Sigmoid colon (tissue), 7 donors: ENCODE measurements at regions of chr4 and their contacts with region 1.

Region 1: GRCh38 chr4:122151982-122152710 is at the start of gene BLTP1:
- DNase-seq: peak; percentile 92
- H3K4me3 ChIP-seq: peak within 1 kb of the TSS; percentile 77 to 96 (median 84)
- H3K27ac ChIP-seq: peak within 1 kb of the TSS; percentile 90 to 95 (median 92)
- H3K4me1 ChIP-seq: peaks cover 0 to 28% (median 17%) of the 10 kb centered on the region in 4 donors
- H3K27me3 ChIP-seq: no peaks in the 10 kb centered on the region
- CTCF ChIP-seq: no peak
- EP300 ChIP-seq: peak in 1 of 4 donors; percentile 32
- POLR2A ChIP-seq: peak; percentile 26 to 62
- total RNA-seq, gene BLTP1: 75.8 to 120 (median 85.1) TPM

Region 2: DNA sequence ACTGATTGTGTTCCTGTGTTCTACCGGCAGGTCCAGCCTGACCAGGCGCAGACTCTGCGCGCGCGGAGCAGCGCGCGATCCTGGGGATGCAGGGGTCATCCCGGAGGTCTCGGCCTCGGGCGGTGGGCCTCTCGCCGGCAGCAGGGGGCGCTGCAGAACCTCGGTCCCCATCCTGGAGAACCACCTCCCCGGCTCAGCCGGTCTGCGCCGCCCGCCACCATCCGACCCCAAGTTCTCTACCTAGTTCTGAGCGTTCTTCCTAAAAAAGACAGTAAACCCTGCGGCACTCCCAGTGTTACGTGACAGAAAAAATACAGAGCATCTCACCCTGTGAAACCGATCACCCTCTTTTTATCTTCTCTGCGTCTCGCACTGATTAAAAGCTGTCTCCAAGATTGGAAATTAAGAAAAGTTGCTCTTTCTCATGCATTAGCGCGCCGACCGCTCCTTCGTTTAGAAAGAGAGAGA is 201.9 kb before region 1 on chr4:
- intact Hi-C with region 1: loop called (anchors 5 kb)
- DNase-seq: peak; percentile 77
- H3K4me3 ChIP-seq: peak overlapping the region; percentile 46 to 67 (median 56)
- H3K27ac ChIP-seq: no peak overlapping the region
- H3K4me1 ChIP-seq: peaks cover 0 to 25% (median 19%) of the 10 kb centered on the region in 4 donors
- H3K27me3 ChIP-seq: peaks cover 0 to 44% (median 5%) of the 10 kb centered on the region in 3 donors
- CTCF ChIP-seq: peak in 3 of 4 experiments; percentile 23 to 67 (median 47)
- EP300 ChIP-seq: no peak
- POLR2A ChIP-seq: no peak

Region 3: GRCh38 chr4:123168812-123169211 is 1016.7 kb after region 1 on chr4:
- intact Hi-C with region 1: no loop called
- DNase-seq: no peak
- H3K4me3 ChIP-seq: no peak overlapping the region
- H3K27ac ChIP-seq: no peak overlapping the region
- H3K4me1 ChIP-seq: no peaks in the 10 kb centered on the region
- H3K27me3 ChIP-seq: no peaks in the 10 kb centered on the region
- CTCF ChIP-seq: no peak
- EP300 ChIP-seq: no peak
- POLR2A ChIP-seq: no peak